ENCODE measurements at regions of chr17 and their contacts with region 1.

Region 1: GRCh38 chr17:77404812-77405581 is 264.2 kb downstream of the SEC14L1 start:
- DNase-seq: peak; percentile 62 to 94 (median 88)
- ATAC-seq: peak; percentile 69
- H3K4me3 ChIP-seq: peak overlapping the region; percentile 58 to 60
- H3K4me3 Mint-ChIP-seq: peak overlapping the region; percentile 93
- H3K27ac ChIP-seq: peak overlapping the region; percentile 65 to 76
- H3K27ac Mint-ChIP-seq: peak overlapping the region; percentile 99
- H3K4me1 ChIP-seq: peaks cover 96% of the 10 kb centered on the region
- H3K4me1 Mint-ChIP-seq: peaks cover 87% of the 10 kb centered on the region
- H3K27me3 ChIP-seq: no peaks in the 10 kb centered on the region
- H3K27me3 Mint-ChIP-seq: no peaks in the 10 kb centered on the region
- CTCF ChIP-seq: no peak

Region 2: GRCh38 chr17:77280980-77281903 is 123.8 kb before region 1 on chr17:
- CTCF ChIA-PET with region 1: no interaction called
- POLR2A ChIA-PET with region 1: no interaction called
- intact Hi-C with region 1: no loop called
- DNase-seq: peak; percentile 24 to 85 (median 63)
- ATAC-seq: peak; percentile 97
- H3K4me3 ChIP-seq: peak overlapping the region; percentile 39 to 68
- H3K4me3 Mint-ChIP-seq: peak overlapping the region; percentile 77
- H3K27ac ChIP-seq: no peak overlapping the region
- H3K27ac Mint-ChIP-seq: peak overlapping the region; percentile 70
- H3K4me1 ChIP-seq: peaks cover 11% of the 10 kb centered on the region
- H3K4me1 Mint-ChIP-seq: peaks cover 6% of the 10 kb centered on the region
- H3K27me3 ChIP-seq: peaks cover 7 to 8% of the 10 kb centered on the region in 2 experiments
- H3K27me3 Mint-ChIP-seq: peaks cover 10% of the 10 kb centered on the region
- CTCF ChIP-seq: no peak

Region 3: DNA sequence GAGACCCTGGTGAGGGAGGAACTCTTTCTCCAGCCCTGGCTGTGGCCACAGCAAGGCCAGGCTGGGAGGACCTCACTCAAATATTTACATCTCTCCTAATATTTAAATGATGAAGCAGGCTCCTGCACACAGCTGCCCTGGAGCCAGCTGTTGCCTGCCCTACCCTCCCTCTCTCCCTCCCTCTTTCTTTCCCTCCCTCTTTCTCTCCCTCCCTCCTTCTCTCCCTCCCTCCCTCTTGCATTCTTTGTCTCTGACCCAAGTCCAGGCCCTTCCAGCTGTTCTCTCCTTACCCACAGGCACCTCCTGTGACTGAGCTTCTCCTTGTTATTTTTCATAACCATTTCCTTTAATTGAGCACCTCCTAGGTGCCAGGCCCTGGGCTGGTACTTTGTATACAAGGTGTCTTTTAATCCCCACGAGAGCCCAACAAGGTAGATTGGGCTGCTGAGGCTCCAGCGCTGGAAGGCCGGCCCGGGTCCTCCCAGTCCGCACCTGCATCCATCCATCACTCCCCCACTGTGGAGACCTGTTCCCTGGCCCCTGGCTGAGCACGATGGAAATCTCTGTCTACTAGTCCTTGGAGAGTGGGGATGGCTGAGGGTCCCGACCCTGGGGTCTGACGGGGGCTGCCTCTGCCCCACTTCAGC is 21.9 kb before region 1 on chr17:
- CTCF ChIA-PET with region 1: interaction called, 63 read pairs
- POLR2A ChIA-PET with region 1: interaction called, 38 read pairs
- intact Hi-C with region 1: loop called in 1 of 2 experiments (anchors 1 kb)
- DNase-seq: no peak
- ATAC-seq: no peak
- H3K4me3 ChIP-seq: peak overlapping the region; percentile 30 to 34
- H3K4me3 Mint-ChIP-seq: peak overlapping the region; percentile 75
- H3K27ac ChIP-seq: peak overlapping the region in 1 of 2 experiments; percentile 40
- H3K27ac Mint-ChIP-seq: peak overlapping the region; percentile 91
- H3K4me1 ChIP-seq: peaks cover 95% of the 10 kb centered on the region
- H3K4me1 Mint-ChIP-seq: peaks cover 89% of the 10 kb centered on the region
- H3K27me3 ChIP-seq: no peaks in the 10 kb centered on the region
- H3K27me3 Mint-ChIP-seq: no peaks in the 10 kb centered on the region
- CTCF ChIP-seq: no peak

Region 4: GRCh38 chr17:77420804-77421629 is 16.0 kb after region 1 on chr17:
- CTCF ChIA-PET with region 1: interaction called, 32 read pairs
- POLR2A ChIA-PET with region 1: interaction called, 28 read pairs
- intact Hi-C with region 1: loop called in 1 of 2 experiments (anchors 2 kb)
- DNase-seq: peak in 8 of 9 experiments; percentile 39 to 79 (median 70)
- ATAC-seq: peak; percentile 62
- H3K4me3 ChIP-seq: peak overlapping the region; percentile 12 to 28
- H3K4me3 Mint-ChIP-seq: peak overlapping the region; percentile 65
- H3K27ac ChIP-seq: peak overlapping the region; percentile 22 to 57
- H3K27ac Mint-ChIP-seq: peak overlapping the region; percentile 91
- H3K4me1 ChIP-seq: peaks cover 75% of the 10 kb centered on the region
- H3K4me1 Mint-ChIP-seq: peaks cover 67% of the 10 kb centered on the region
- H3K27me3 ChIP-seq: no peaks in the 10 kb centered on the region
- H3K27me3 Mint-ChIP-seq: no peaks in the 10 kb centered on the region
- CTCF ChIP-seq: no peak

Region 5: GRCh38 chr17:77444984-77445759 is 40.2 kb after region 1 on chr17:
- CTCF ChIA-PET with region 1: interaction called, 23 read pairs
- POLR2A ChIA-PET with region 1: interaction called, 21 read pairs
- intact Hi-C with region 1: loop called in 1 of 2 experiments (anchors 1 kb)
- DNase-seq: peak; percentile 75 to 99 (median 85)
- ATAC-seq: peak; percentile 62
- H3K4me3 ChIP-seq: peak overlapping the region; percentile 32 to 38
- H3K4me3 Mint-ChIP-seq: peak overlapping the region; percentile 82
- H3K27ac ChIP-seq: peak overlapping the region; percentile 64 to 72
- H3K27ac Mint-ChIP-seq: peak overlapping the region; percentile 97
- H3K4me1 ChIP-seq: peaks cover 92% of the 10 kb centered on the region
- H3K4me1 Mint-ChIP-seq: peaks cover 90% of the 10 kb centered on the region
- H3K27me3 ChIP-seq: no peaks in the 10 kb centered on the region
- H3K27me3 Mint-ChIP-seq: no peaks in the 10 kb centered on the region
- CTCF ChIP-seq: no peak

Region 6: GRCh38 chr17:77465358-77466041 is 60.5 kb after region 1 on chr17:
- CTCF ChIA-PET with region 1: interaction called, 19 read pairs
- POLR2A ChIA-PET with region 1: interaction called, 14 read pairs
- intact Hi-C with region 1: no loop called
- DNase-seq: peak; percentile 58 to 93 (median 82)
- ATAC-seq: peak; percentile 91
- H3K4me3 ChIP-seq: peak overlapping the region; percentile 29 to 51
- H3K4me3 Mint-ChIP-seq: peak overlapping the region; percentile 71
- H3K27ac ChIP-seq: peak overlapping the region; percentile 28 to 68
- H3K27ac Mint-ChIP-seq: peak overlapping the region; percentile 94
- H3K4me1 ChIP-seq: peaks cover 94% of the 10 kb centered on the region
- H3K4me1 Mint-ChIP-seq: peaks cover 87% of the 10 kb centered on the region
- H3K27me3 ChIP-seq: no peaks in the 10 kb centered on the region
- H3K27me3 Mint-ChIP-seq: no peaks in the 10 kb centered on the region
- CTCF ChIP-seq: no peak

Region 7: DNA sequence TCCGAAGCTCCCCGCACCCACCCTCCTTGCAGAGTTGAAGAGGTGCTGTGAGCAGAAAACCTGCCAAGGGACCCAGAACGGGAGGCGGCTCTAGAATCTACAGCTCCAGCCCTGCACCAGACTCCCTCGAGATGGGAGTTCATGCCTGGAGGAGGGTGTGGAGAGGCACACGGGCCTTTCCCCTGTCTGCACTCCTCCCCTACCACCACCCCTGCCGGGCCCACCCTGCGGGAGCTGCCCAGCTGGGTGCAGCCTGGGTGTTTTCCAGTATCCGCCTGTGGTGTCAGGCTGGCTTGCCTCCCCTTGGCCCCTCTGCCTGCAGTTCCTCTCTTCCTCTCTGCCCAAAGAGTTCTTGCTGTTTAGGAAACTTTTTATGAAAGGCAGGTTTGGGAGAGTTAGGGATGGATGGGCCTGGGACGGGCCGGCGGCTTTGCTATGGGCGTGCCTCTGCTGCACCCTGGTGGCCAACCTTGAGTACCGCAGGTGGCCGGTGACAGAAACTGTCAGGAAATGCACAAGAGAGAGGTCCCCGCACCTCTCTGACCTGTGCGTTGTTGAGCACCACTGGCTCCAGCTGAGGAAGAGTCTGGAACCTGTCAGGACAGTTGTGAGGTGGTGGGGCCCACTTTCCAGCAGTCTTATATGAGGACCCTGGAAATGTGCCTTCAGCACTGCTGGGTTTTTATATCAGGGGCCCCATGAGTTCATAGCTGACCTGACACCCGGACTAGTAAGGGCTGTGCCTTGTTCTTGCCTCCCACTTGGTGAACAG is 89.9 kb after region 1 on chr17:
- CTCF ChIA-PET with region 1: interaction called, 75 read pairs
- POLR2A ChIA-PET with region 1: interaction called, 12 read pairs
- intact Hi-C with region 1: loop called (anchors 1 kb)
- DNase-seq: peak; percentile 52 to 89 (median 75)
- ATAC-seq: peak; percentile 75
- H3K4me3 ChIP-seq: no peak overlapping the region
- H3K4me3 Mint-ChIP-seq: no peak overlapping the region
- H3K27ac ChIP-seq: peak overlapping the region in 1 of 2 experiments; percentile 28
- H3K27ac Mint-ChIP-seq: peak overlapping the region; percentile 89
- H3K4me1 ChIP-seq: peaks cover 31% of the 10 kb centered on the region
- H3K4me1 Mint-ChIP-seq: peaks cover 25% of the 10 kb centered on the region
- H3K27me3 ChIP-seq: no peaks in the 10 kb centered on the region
- H3K27me3 Mint-ChIP-seq: no peaks in the 10 kb centered on the region
- CTCF ChIP-seq: peak; percentile 99